Colonic mucosa (tissue), 4 donors: ENCODE measurements at regions of chr3 and their contacts with region 1.

Region 1: DNA sequence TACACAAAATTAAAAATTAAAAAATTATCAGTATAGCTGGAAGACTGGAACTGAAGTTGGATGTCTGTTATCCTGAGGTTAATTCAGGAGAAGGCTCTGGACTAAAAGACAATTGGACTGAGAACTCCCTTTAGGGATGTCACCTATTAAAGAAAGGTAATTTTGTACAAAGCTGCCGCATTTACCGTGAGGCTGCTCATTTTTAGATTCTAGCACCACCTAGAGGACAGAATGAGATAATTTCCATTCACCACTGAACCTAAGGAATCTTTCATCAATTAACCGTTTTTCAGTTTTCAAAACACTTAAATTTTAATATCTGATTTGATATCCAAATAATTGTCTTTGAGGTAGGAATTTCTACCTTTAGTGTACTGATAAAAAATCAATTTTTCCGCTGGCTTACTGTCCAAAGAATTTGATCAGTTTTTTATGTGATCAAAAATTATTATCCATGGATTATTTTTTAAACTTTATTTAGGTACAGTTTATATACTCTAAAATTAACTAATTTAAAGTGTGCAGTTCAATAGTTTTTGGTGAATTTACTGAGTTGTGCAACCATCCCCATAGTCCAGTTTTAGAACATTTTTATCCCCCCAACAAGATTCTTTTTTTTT is 106.7 kb upstream of the TNIK start:
- DNase-seq: no peak
- H3K4me3 ChIP-seq: no peak overlapping the region
- H3K27ac ChIP-seq: no peak overlapping the region
- H3K4me1 ChIP-seq: no peaks in the 10 kb centered on the region
- H3K27me3 ChIP-seq: no peaks in the 10 kb centered on the region
- CTCF ChIP-seq: peak; percentile 68

Region 2: DNA sequence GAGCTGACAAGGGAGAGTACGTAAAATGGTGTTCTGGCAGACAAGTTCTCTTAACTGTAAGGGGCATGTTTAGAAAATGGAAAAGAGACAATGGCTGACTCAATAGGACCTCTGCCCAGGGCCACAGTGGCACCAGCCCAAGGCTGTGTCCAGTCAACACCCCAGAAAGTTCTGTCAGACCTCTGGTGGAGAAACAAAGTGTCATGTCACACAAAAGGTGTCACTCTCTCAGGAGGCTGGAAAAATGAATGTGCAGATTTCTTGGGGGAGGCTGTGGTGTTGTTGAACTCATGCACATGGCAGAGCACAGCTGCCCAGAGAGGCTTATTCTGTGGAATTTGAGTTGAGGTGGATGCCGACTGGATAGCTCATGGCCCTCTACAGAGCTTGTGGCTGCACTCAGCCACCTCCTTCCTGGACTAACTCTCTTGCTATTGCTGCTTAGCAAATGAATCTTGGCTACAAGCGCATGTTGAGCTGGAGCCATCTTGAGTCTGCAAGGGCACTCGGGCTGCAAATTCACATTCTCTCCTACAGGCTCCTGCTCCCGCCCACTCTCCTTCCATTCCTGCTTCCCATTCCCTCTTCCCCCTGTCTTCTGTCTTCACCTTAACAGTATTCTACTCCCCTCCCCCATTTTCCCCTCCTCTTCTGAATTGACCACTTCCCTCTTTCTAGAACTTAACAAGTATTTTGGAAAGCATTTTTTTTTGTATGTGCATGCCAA is 925.2 kb before region 1 on chr3:
- intact Hi-C with region 1: no loop called
- DNase-seq: no peak
- H3K4me3 ChIP-seq: no peak overlapping the region
- H3K27ac ChIP-seq: no peak overlapping the region
- H3K4me1 ChIP-seq: no peaks in the 10 kb centered on the region
- H3K27me3 ChIP-seq: no peaks in the 10 kb centered on the region
- CTCF ChIP-seq: no peak

Region 3: DNA sequence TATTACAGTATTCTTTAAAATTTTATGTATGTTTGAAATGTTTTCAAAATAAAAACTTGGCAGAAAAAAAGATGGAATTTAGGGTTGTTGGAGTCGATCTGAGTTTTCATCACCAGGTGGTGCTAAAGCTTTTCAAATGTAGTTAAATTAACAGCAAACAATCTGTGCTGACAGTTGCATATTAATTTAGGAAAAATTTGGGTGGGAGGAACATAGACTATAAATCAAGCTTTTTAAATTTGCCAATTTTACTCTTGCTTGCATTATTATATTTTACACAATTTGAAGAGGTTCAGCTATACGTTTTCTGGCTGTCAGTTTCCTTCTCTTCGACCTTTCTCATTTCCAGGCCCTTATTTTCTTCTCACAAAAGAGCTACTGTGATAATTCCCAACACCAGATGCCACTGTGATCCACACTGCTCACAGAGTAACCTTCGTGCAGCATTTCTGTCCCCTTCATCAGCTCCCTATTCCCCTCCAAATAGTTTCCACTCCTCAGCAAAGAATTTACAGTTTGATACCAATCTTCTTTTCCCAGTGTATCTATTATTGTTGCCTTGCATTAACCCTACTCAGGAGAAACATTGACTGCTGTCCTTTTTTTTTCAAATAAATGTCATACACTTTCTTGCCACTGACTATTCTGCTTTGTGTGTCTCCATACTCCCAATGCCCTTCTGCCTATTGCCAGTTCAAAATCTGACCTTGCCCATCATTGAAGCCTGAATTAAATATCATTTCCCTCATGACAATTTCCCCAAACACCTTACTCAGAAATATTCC is 605.1 kb before region 1 on chr3:
- intact Hi-C with region 1: loop called (anchors 5 kb)
- DNase-seq: peak; percentile 27
- H3K4me3 ChIP-seq: no peak overlapping the region
- H3K27ac ChIP-seq: no peak overlapping the region
- H3K4me1 ChIP-seq: no peaks in the 10 kb centered on the region
- H3K27me3 ChIP-seq: no peaks in the 10 kb centered on the region
- CTCF ChIP-seq: peak; percentile 41

Region 4: DNA sequence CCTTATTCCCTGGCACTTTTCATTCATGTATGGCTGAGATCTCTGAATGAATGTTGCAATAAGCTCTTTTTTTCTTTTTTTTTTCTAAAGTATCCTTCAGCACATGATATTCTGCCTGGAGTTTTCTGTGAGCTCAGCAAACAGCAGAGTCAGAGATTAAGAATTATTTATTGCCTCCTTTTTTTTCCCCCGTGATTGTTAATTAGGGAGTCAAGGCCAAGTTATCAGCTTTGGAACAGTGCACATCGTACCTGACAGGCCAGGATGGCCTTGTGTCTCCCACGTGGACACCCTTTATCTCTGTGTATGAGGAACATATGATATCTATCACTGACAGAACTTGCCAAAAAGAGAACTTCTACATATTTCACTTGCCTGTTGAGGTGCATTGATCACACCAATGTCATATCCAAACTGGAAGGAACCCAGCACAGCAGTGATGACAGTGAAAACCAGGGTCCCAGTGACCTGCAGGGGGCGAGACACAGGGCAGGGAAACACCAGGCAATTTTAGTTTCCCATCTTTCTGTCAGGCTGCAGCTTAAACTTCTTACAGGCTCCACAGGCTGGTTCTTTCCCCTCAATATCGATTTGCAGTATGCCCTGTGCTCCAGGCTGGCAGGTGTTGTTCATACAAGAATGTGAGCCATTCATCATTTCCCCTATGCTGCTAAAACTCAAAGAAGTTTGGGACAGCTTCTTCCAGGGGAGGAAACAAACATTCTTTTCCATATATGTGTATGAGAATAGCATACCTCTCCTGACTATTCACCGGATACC is 548.6 kb before region 1 on chr3:
- intact Hi-C with region 1: no loop called
- DNase-seq: no peak
- H3K4me3 ChIP-seq: no peak overlapping the region
- H3K27ac ChIP-seq: no peak overlapping the region
- H3K4me1 ChIP-seq: no peaks in the 10 kb centered on the region
- H3K27me3 ChIP-seq: no peaks in the 10 kb centered on the region
- CTCF ChIP-seq: no peak

Region 5: GRCh38 chr3:171049861-171050444 is 517.0 kb before region 1 on chr3:
- intact Hi-C with region 1: loop called (anchors 5 kb)
- DNase-seq: peak; percentile 31
- H3K4me3 ChIP-seq: no peak overlapping the region
- H3K27ac ChIP-seq: no peak overlapping the region
- H3K4me1 ChIP-seq: no peaks in the 10 kb centered on the region
- H3K27me3 ChIP-seq: no peaks in the 10 kb centered on the region
- CTCF ChIP-seq: peak; percentile 36

Region 6: DNA sequence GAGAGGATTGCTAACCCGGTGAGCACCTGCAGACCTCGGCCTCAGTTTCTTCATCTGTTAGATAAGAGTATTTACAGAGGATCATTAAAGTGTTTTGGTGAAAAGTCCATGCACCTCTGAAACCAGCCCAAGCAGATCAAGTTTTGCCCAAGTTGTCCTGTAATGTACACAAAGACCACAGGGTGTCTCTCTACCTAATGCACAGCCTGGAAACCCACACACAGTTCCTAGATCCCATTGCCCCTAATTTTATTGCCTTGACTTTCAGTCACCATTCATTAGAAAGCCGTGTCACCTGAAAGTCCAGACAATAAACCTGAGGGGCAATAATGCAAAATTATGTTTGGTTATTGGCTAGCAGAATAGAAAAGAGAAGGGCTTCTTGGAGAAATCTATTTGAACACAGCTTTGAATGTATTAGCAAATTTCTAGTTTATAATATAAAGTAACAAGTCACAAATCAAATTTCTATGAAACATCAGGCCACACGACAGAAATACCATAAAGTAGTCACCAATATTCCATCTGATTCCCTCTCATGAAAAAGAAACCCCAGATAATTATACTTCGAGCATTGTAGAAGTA is 379.1 kb before region 1 on chr3:
- intact Hi-C with region 1: loop called (anchors 5 kb)
- DNase-seq: peak; percentile 27
- H3K4me3 ChIP-seq: no peak overlapping the region
- H3K27ac ChIP-seq: no peak overlapping the region
- H3K4me1 ChIP-seq: no peaks in the 10 kb centered on the region
- H3K27me3 ChIP-seq: no peaks in the 10 kb centered on the region
- CTCF ChIP-seq: peak; percentile 42